Activated CD4-positive, alpha-beta memory T cell treated with anti-CD3 and anti-CD28 coated beads, Interleukin-2, amount 10 ng/mL, durations not matched to agents 7 days and 5 days (primary cell): ENCODE measurements at regions of chr12 and their contacts with region 1.

Region 1: DNA sequence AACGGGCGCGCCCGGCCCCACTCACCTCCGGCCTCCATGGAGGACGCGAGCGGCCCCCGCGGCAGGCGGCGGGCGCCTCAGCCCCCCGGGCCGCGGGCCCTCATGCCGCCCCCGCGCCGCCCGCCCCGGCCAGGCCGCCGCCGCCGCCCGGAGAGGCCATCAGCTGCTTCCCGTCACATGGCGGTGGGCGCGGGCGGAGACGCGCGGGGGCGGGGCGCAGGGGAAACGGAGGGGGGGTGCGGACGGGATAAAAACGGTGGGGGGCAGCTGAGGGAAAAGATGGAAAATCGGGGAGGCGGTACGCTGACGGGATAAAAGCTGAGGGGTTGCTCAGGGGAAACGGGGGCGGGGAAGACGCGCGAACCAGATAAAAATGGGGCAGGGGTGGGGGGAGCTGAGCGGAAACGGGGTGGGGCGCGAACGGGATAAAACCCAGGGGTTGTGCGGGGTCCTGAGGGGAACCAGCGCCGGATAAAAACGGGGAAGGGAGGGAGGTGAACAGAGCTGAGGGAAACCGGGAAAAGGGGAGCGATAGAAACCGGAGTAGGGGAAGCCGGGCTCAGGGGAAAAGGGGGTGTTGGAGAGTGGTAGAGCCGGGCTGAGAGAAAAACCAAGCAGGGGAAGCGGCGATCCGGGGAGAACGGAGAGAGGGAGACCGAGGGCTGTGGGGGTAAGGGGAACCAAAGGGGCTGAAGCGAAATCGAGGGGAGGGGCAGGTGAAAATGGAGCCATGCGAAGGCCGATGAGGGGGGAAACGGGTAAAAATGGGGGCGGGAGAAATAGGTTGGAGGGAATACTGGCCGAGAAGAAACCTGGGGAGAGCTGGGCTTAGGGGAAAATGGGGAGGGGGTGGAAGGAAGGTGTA is at the start of gene WSB2:
- DNase-seq: peak; percentile 64
- H3K4me3 Mint-ChIP-seq: peak within 1 kb of the TSS; percentile 91
- H3K27ac Mint-ChIP-seq: peak within 1 kb of the TSS; percentile 90
- H3K4me1 Mint-ChIP-seq: peaks cover 53% of the 10 kb centered on the region
- H3K27me3 Mint-ChIP-seq: no peaks in the 10 kb centered on the region
- total RNA-seq, gene WSB2: 49.6 to 53.9 TPM

Region 2: GRCh38 chr12:117874842-117875434 is 186.3 kb before region 1 on chr12:
- CTCF ChIA-PET with region 1: interaction called, 14 read pairs
- POLR2A ChIA-PET with region 1: no interaction called
- DNase-seq: peak; percentile 67
- H3K4me3 Mint-ChIP-seq: no peak overlapping the region
- H3K27ac Mint-ChIP-seq: no peak overlapping the region
- H3K4me1 Mint-ChIP-seq: peaks cover 8% of the 10 kb centered on the region
- H3K27me3 Mint-ChIP-seq: peaks cover 12% of the 10 kb centered on the region

Region 3: DNA sequence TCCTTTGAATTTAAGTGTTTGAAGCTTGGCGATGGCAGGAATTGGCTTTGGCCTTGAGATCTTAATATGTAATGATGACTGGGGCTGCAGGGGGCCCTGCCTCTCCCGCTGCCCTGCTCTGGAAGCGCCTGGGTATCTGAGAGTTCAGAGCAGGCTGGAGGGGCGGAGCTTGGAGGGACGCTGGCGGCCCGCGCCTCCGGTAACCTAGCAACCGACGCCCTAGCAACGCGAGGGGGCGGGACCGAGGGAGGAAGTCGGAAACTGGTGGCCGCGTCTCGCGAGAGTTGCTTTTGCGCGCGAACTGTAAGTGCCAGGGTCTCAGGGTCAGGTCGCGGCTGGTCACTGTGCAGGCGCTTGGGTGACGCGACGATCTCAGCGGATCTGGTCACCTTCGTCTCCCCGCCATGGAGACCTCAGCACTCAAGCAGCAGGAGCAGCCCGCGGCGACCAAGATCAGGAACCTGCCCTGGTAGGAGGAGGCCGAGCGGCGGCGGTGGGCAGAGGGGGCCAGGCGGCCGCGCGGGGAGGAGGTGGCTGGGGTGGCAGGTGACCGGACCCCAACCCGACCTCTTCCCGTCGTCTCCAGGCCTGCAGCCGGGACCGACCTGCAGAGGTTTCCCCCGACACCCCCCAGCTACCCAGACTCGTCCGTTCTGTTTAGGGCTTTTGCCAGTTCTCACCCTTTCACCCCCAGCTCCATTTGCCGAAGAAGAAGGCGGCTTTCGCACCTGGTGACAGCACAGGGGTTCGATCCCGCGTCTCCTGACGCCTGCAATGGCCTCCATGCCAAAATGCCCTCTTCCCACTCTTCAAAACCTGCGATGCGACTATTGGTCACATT is 44.6 kb before region 1 on chr12 and contains the start of gene RFC5:
- CTCF ChIA-PET with region 1: no interaction called
- POLR2A ChIA-PET with region 1: interaction called, 40 read pairs
- DNase-seq: peak; percentile 98
- H3K4me3 Mint-ChIP-seq: peak within 1 kb of the TSS; percentile 84
- H3K27ac Mint-ChIP-seq: peak within 1 kb of the TSS; percentile 84
- H3K4me1 Mint-ChIP-seq: peaks cover 29% of the 10 kb centered on the region
- H3K27me3 Mint-ChIP-seq: peaks cover 4% of the 10 kb centered on the region
- total RNA-seq, gene RFC5: 39.7 to 41.0 TPM

Region 4: GRCh38 chr12:118035246-118036041 is 25.8 kb before region 1 on chr12:
- CTCF ChIA-PET with region 1: interaction called, 4 read pairs
- POLR2A ChIA-PET with region 1: interaction called, 31 read pairs
- DNase-seq: no peak
- H3K4me3 Mint-ChIP-seq: no peak overlapping the region
- H3K27ac Mint-ChIP-seq: peak overlapping the region; percentile 63
- H3K4me1 Mint-ChIP-seq: peaks cover 37% of the 10 kb centered on the region
- H3K27me3 Mint-ChIP-seq: no peaks in the 10 kb centered on the region

Region 5: GRCh38 chr12:118044075-118044474 is 17.2 kb before region 1 on chr12:
- CTCF ChIA-PET with region 1: interaction called, 3 read pairs
- POLR2A ChIA-PET with region 1: interaction called, 11 read pairs
- DNase-seq: no peak
- H3K4me3 Mint-ChIP-seq: no peak overlapping the region
- H3K27ac Mint-ChIP-seq: no peak overlapping the region
- H3K4me1 Mint-ChIP-seq: peaks cover 21% of the 10 kb centered on the region
- H3K27me3 Mint-ChIP-seq: no peaks in the 10 kb centered on the region

Region 6: GRCh38 chr12:118089782-118090181 is 28.5 kb after region 1 on chr12:
- CTCF ChIA-PET with region 1: no interaction called
- POLR2A ChIA-PET with region 1: no interaction called
- DNase-seq: no peak
- H3K4me3 Mint-ChIP-seq: no peak overlapping the region
- H3K27ac Mint-ChIP-seq: no peak overlapping the region
- H3K4me1 Mint-ChIP-seq: no peaks in the 10 kb centered on the region
- H3K27me3 Mint-ChIP-seq: no peaks in the 10 kb centered on the region

Region 7: GRCh38 chr12:118135788-118136558 is 74.7 kb after region 1 on chr12 and contains the start of gene PEBP1:
- CTCF ChIA-PET with region 1: interaction called, 11 read pairs
- POLR2A ChIA-PET with region 1: interaction called, 31 read pairs
- DNase-seq: peak; percentile 94
- H3K4me3 Mint-ChIP-seq: peak within 1 kb of the TSS; percentile 82
- H3K27ac Mint-ChIP-seq: peak within 1 kb of the TSS; percentile 84
- H3K4me1 Mint-ChIP-seq: peaks cover 33% of the 10 kb centered on the region
- H3K27me3 Mint-ChIP-seq: no peaks in the 10 kb centered on the region
- total RNA-seq, gene PEBP1: 75.5 to 76.7 TPM